B cell (primary cell): ENCODE measurements at regions of chr6 and their contacts with region 1.

Region 1: DNA sequence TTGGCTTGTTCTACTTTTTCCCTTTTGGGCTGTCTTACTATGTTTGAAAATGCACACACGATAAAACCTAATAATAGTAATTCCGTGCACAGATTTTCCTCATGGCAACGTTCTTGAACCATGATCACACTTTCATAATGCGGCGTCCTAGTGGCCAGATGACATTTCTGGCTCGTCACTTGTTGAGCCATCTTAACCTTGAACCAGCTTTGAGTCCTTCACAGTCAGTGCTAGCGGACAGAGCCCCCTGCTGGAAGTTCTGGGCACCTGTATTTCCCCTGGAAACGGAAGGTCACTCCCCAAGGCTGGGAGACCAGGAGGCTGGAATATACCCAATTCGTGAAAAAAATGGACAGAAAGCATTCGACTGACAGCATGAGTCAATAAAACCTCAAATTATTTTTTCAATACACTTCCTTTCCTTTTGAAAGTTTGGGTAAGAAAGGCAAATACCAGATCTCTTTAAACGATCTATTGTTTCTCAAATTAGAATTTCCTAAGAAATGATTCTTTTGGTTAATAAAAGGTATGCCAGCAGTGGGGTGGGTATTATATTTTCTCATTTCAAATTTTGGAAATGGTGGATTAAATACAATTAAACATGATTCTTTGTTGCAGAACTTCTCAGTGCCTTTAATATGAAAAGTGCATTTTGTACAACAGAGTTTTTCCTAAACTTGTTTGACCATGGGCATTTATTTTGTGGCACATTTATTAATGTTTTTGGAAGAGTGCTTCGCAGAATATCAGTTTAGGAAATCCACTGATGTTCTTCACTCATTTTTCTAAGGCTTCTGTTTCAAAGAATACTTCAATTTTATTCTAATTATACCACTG is 542.3 kb downstream of the QKI start:
- DNase-seq: peak; percentile 75
- ATAC-seq: peak; percentile 88
- H3K4me3 ChIP-seq: no peak overlapping the region
- H3K4me3 Mint-ChIP-seq: no peak overlapping the region
- H3K27ac ChIP-seq: no peak overlapping the region
- H3K27ac Mint-ChIP-seq: no peak overlapping the region
- H3K4me1 ChIP-seq: peaks cover 0 to 4% of the 10 kb centered on the region in 2 donors
- H3K4me1 Mint-ChIP-seq: no peaks in the 10 kb centered on the region
- H3K27me3 ChIP-seq: peaks cover 0 to 22% (median 4%) of the 10 kb centered on the region in 4 experiments
- H3K27me3 Mint-ChIP-seq: peaks cover 12% of the 10 kb centered on the region
- CTCF ChIP-seq: peak; percentile 97

Region 2: DNA sequence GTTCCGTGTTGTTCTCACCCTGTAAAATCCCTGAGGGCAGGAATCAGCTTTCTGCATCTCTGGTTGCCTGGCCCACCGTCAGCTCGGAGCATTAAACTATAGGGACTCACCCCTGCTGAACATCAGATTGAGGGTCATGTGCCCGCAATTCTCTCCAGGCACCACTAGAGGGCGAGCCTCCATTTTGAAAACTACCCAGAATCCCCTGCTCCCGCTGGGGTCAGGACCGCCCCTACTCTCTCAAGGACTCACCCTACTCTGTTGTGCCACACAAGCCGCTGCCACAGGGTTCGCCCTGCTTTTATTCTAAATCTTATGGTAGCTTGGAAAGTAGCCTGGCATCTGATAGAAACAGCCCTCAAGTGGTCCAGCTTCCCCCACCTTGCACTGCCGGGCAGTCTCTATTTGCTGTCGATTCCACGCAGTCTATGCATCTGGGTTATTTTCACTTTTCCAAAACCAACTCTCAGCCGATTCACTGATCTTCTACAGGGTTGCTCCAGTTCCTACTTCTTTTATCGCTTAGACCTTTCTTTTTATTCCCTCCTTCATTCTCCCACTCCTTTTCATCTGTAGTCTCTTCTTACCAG is 786.4 kb before region 1 on chr6:
- CTCF ChIA-PET with region 1: interaction called, 8 read pairs
- POLR2A ChIA-PET with region 1: no interaction called
- intact Hi-C with region 1: loop called (anchors 1 kb)
- DNase-seq: peak; percentile 34
- ATAC-seq: peak; percentile 62
- H3K4me3 ChIP-seq: no peak overlapping the region
- H3K4me3 Mint-ChIP-seq: no peak overlapping the region
- H3K27ac ChIP-seq: no peak overlapping the region
- H3K27ac Mint-ChIP-seq: no peak overlapping the region
- H3K4me1 ChIP-seq: no peaks in the 10 kb centered on the region
- H3K4me1 Mint-ChIP-seq: peaks cover 2% of the 10 kb centered on the region
- H3K27me3 ChIP-seq: no peaks in the 10 kb centered on the region
- H3K27me3 Mint-ChIP-seq: peaks cover 4% of the 10 kb centered on the region
- CTCF ChIP-seq: peak; percentile 76

Region 3: GRCh38 chr6:163413345-163414116 is 543.3 kb before region 1 on chr6:
- CTCF ChIA-PET with region 1: interaction called, 31 read pairs
- POLR2A ChIA-PET with region 1: no interaction called
- intact Hi-C with region 1: loop called (anchors 1 kb)
- DNase-seq: peak; percentile 97
- ATAC-seq: peak; percentile 68
- H3K4me3 ChIP-seq: peak overlapping the region; percentile 45 to 77 (median 70)
- H3K4me3 Mint-ChIP-seq: peak overlapping the region; percentile 91
- H3K27ac ChIP-seq: peak overlapping the region; percentile 93 to 96
- H3K27ac Mint-ChIP-seq: peak overlapping the region; percentile 96
- H3K4me1 ChIP-seq: peaks cover 18 to 21% of the 10 kb centered on the region in 2 donors
- H3K4me1 Mint-ChIP-seq: peaks cover 28% of the 10 kb centered on the region
- H3K27me3 ChIP-seq: no peaks in the 10 kb centered on the region
- H3K27me3 Mint-ChIP-seq: peaks cover 4% of the 10 kb centered on the region
- CTCF ChIP-seq: no peak

Region 4: GRCh38 chr6:163419413-163420288 is 537.1 kb before region 1 on chr6:
- CTCF ChIA-PET with region 1: interaction called, 51 read pairs
- POLR2A ChIA-PET with region 1: no interaction called
- intact Hi-C with region 1: loop called (anchors 1 kb)
- DNase-seq: no peak
- ATAC-seq: no peak
- H3K4me3 ChIP-seq: no peak overlapping the region
- H3K4me3 Mint-ChIP-seq: no peak overlapping the region
- H3K27ac ChIP-seq: no peak overlapping the region
- H3K27ac Mint-ChIP-seq: no peak overlapping the region
- H3K4me1 ChIP-seq: peaks cover 8 to 26% of the 10 kb centered on the region in 2 donors
- H3K4me1 Mint-ChIP-seq: peaks cover 53% of the 10 kb centered on the region
- H3K27me3 ChIP-seq: no peaks in the 10 kb centered on the region
- H3K27me3 Mint-ChIP-seq: no peaks in the 10 kb centered on the region
- CTCF ChIP-seq: no peak

Region 5: GRCh38 chr6:163427498-163428254 is 529.1 kb before region 1 on chr6:
- CTCF ChIA-PET with region 1: interaction called, 51 read pairs
- POLR2A ChIA-PET with region 1: no interaction called
- intact Hi-C with region 1: loop called (anchors 1 kb)
- DNase-seq: peak; percentile 56
- ATAC-seq: no peak
- H3K4me3 ChIP-seq: no peak overlapping the region
- H3K4me3 Mint-ChIP-seq: no peak overlapping the region
- H3K27ac ChIP-seq: no peak overlapping the region
- H3K27ac Mint-ChIP-seq: no peak overlapping the region
- H3K4me1 ChIP-seq: no peaks in the 10 kb centered on the region
- H3K4me1 Mint-ChIP-seq: peaks cover 48% of the 10 kb centered on the region
- H3K27me3 ChIP-seq: no peaks in the 10 kb centered on the region
- H3K27me3 Mint-ChIP-seq: no peaks in the 10 kb centered on the region
- CTCF ChIP-seq: peak; percentile 61

Region 6: GRCh38 chr6:163568275-163568674 is 388.5 kb before region 1 on chr6:
- CTCF ChIA-PET with region 1: no interaction called
- POLR2A ChIA-PET with region 1: no interaction called
- intact Hi-C with region 1: loop called (anchors 2 kb)
- DNase-seq: no peak
- ATAC-seq: no peak
- H3K4me3 ChIP-seq: no peak overlapping the region
- H3K4me3 Mint-ChIP-seq: no peak overlapping the region
- H3K27ac ChIP-seq: no peak overlapping the region
- H3K27ac Mint-ChIP-seq: no peak overlapping the region
- H3K4me1 ChIP-seq: no peaks in the 10 kb centered on the region
- H3K4me1 Mint-ChIP-seq: no peaks in the 10 kb centered on the region
- H3K27me3 ChIP-seq: no peaks in the 10 kb centered on the region
- H3K27me3 Mint-ChIP-seq: no peaks in the 10 kb centered on the region
- CTCF ChIP-seq: no peak

Region 7: GRCh38 chr6:163655217-163656121 is 301.3 kb before region 1 on chr6:
- CTCF ChIA-PET with region 1: no interaction called
- POLR2A ChIA-PET with region 1: no interaction called
- intact Hi-C with region 1: loop called (anchors 5 kb)
- DNase-seq: peak; percentile 21
- ATAC-seq: no peak
- H3K4me3 ChIP-seq: no peak overlapping the region
- H3K4me3 Mint-ChIP-seq: no peak overlapping the region
- H3K27ac ChIP-seq: no peak overlapping the region
- H3K27ac Mint-ChIP-seq: no peak overlapping the region
- H3K4me1 ChIP-seq: peaks cover 3 to 7% of the 10 kb centered on the region in 2 donors
- H3K4me1 Mint-ChIP-seq: peaks cover 18% of the 10 kb centered on the region
- H3K27me3 ChIP-seq: peaks cover 0 to 5% (median 0%) of the 10 kb centered on the region in 4 experiments
- H3K27me3 Mint-ChIP-seq: peaks cover 7% of the 10 kb centered on the region
- CTCF ChIP-seq: no peak

Region 8: DNA sequence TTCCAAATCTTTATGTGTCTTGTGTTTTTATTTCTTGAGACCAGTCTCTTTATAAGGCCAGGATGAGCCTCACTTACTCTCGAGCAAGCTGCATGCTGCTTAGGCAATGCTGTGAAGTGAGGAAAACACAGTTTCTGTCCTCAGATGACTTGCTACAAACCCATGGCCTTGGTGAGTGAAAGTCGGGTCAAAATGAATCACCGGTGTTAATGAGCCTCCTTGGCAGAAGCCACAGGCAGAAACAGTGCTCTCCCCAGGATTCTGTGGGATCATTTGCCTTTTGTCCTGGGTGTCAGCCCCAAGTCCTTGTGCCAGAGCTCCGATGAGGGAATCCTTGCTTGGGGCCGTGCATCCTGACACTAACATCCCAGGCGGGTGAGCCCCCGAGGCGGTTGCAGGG is 59.8 kb before region 1 on chr6:
- CTCF ChIA-PET with region 1: no interaction called
- POLR2A ChIA-PET with region 1: no interaction called
- intact Hi-C with region 1: no loop called
- DNase-seq: no peak
- ATAC-seq: no peak
- H3K4me3 ChIP-seq: no peak overlapping the region
- H3K4me3 Mint-ChIP-seq: no peak overlapping the region
- H3K27ac ChIP-seq: no peak overlapping the region
- H3K27ac Mint-ChIP-seq: no peak overlapping the region
- H3K4me1 ChIP-seq: no peaks in the 10 kb centered on the region
- H3K4me1 Mint-ChIP-seq: no peaks in the 10 kb centered on the region
- H3K27me3 ChIP-seq: peaks cover 0 to 3% (median 0%) of the 10 kb centered on the region in 4 experiments
- H3K27me3 Mint-ChIP-seq: peaks cover 8% of the 10 kb centered on the region
- CTCF ChIP-seq: no peak